ENCODE measurements at regions of chr4 and their contacts with region 1.

Region 1: DNA sequence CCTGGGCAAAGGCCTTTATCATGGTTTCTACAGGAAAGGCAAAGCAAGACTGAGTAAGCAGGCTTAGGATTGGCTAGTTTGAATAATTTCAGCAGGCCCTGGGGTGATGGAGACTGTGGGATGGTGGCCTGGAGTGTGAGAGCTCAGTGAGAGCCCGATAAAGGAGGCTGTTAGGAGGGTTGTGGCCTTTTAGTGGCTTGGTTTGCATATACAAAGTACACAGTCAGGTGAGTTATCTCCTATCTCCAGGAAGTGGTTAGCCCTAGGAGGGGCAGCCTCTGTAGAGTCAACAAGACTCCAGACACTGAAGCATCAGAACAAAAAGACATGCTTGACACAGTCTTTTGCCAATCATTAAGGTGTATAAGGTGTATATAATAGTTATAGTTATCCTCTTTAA is 157.2 kb downstream of the CFAP299 start:
- DNase-seq: peak; percentile 22 to 81 (median 65)
- ATAC-seq: peak; percentile 95
- H3K4me3 ChIP-seq: no peak overlapping the region
- H3K4me3 Mint-ChIP-seq: peak overlapping the region; percentile 40
- H3K27ac ChIP-seq: peak overlapping the region; percentile 51 to 56
- H3K27ac Mint-ChIP-seq: peak overlapping the region; percentile 98
- H3K4me1 ChIP-seq: peaks cover 43% of the 10 kb centered on the region
- H3K4me1 Mint-ChIP-seq: peaks cover 64% of the 10 kb centered on the region
- H3K27me3 ChIP-seq: no peaks in the 10 kb centered on the region
- H3K27me3 Mint-ChIP-seq: no peaks in the 10 kb centered on the region
- CTCF ChIP-seq: no peak

Region 2: GRCh38 chr4:80393246-80393969 is 99.4 kb before region 1 on chr4:
- CTCF ChIA-PET with region 1: no interaction called
- POLR2A ChIA-PET with region 1: no interaction called
- intact Hi-C with region 1: no loop called
- DNase-seq: no peak
- ATAC-seq: no peak
- H3K4me3 ChIP-seq: no peak overlapping the region
- H3K4me3 Mint-ChIP-seq: no peak overlapping the region
- H3K27ac ChIP-seq: no peak overlapping the region
- H3K27ac Mint-ChIP-seq: no peak overlapping the region
- H3K4me1 ChIP-seq: no peaks in the 10 kb centered on the region
- H3K4me1 Mint-ChIP-seq: no peaks in the 10 kb centered on the region
- H3K27me3 ChIP-seq: no peaks in the 10 kb centered on the region
- H3K27me3 Mint-ChIP-seq: no peaks in the 10 kb centered on the region
- CTCF ChIP-seq: no peak

Region 3: DNA sequence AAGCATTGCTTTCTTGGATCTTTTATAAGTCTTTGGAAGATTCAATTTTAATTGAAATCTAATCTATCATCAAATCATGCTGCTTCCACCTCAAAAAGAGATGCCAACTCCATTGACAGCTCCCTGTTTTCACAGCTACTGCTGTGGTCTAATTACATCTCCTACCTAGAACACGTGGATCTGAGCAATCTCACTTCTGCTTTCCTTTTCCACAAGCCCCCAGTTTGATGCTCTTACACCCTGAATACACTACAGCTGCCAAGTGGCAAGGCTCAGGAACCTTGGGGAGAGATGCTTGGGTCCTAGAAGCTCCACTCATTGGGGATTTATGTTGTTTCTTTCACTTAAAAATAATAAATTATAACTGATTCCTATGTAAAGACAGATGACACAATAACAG is 14.7 kb after region 1 on chr4:
- CTCF ChIA-PET with region 1: no interaction called
- POLR2A ChIA-PET with region 1: interaction called, 4 read pairs
- intact Hi-C with region 1: loop called in 1 of 2 experiments (anchors 2 kb)
- DNase-seq: no peak
- ATAC-seq: no peak
- H3K4me3 ChIP-seq: no peak overlapping the region
- H3K4me3 Mint-ChIP-seq: no peak overlapping the region
- H3K27ac ChIP-seq: no peak overlapping the region
- H3K27ac Mint-ChIP-seq: peak overlapping the region; percentile 67
- H3K4me1 ChIP-seq: peaks cover 24% of the 10 kb centered on the region
- H3K4me1 Mint-ChIP-seq: peaks cover 42% of the 10 kb centered on the region
- H3K27me3 ChIP-seq: no peaks in the 10 kb centered on the region
- H3K27me3 Mint-ChIP-seq: no peaks in the 10 kb centered on the region
- CTCF ChIP-seq: no peak

Region 4: GRCh38 chr4:80540785-80541469 is 48.2 kb after region 1 on chr4:
- CTCF ChIA-PET with region 1: no interaction called
- POLR2A ChIA-PET with region 1: no interaction called
- intact Hi-C with region 1: loop called in 1 of 2 experiments (anchors 10 kb)
- DNase-seq: peak in 2 of 9 experiments; percentile 18 to 39
- ATAC-seq: peak; percentile 48
- H3K4me3 ChIP-seq: no peak overlapping the region
- H3K4me3 Mint-ChIP-seq: no peak overlapping the region
- H3K27ac ChIP-seq: no peak overlapping the region
- H3K27ac Mint-ChIP-seq: no peak overlapping the region
- H3K4me1 ChIP-seq: peaks cover 12% of the 10 kb centered on the region
- H3K4me1 Mint-ChIP-seq: peaks cover 20% of the 10 kb centered on the region
- H3K27me3 ChIP-seq: no peaks in the 10 kb centered on the region
- H3K27me3 Mint-ChIP-seq: peaks cover 2% of the 10 kb centered on the region
- CTCF ChIP-seq: no peak